ENCODE measurements at regions of chr9 and their contacts with region 1.

Region 1: GRCh38 chr9:111298731-111299598 is 31.1 kb downstream of the OR2K2 start:
- DNase-seq: no peak
- ATAC-seq: peak; percentile 47
- H3K4me3 Mint-ChIP-seq: no peak overlapping the region
- H3K27ac Mint-ChIP-seq: no peak overlapping the region
- H3K4me1 Mint-ChIP-seq: no peaks in the 10 kb centered on the region
- H3K27me3 Mint-ChIP-seq: peaks cover 6% of the 10 kb centered on the region

Region 2: GRCh38 chr9:110183208-110184145 is 1115.5 kb before region 1 on chr9:
- CTCF ChIA-PET with region 1: interaction called, 5 read pairs
- POLR2A ChIA-PET with region 1: no interaction called
- intact Hi-C with region 1: loop called (anchors 1 to 2 kb)
- DNase-seq: peak; percentile 77
- ATAC-seq: peak; percentile 90
- H3K4me3 Mint-ChIP-seq: no peak overlapping the region
- H3K27ac Mint-ChIP-seq: no peak overlapping the region
- H3K4me1 Mint-ChIP-seq: peaks cover 2% of the 10 kb centered on the region
- H3K27me3 Mint-ChIP-seq: no peaks in the 10 kb centered on the region

Region 3: DNA sequence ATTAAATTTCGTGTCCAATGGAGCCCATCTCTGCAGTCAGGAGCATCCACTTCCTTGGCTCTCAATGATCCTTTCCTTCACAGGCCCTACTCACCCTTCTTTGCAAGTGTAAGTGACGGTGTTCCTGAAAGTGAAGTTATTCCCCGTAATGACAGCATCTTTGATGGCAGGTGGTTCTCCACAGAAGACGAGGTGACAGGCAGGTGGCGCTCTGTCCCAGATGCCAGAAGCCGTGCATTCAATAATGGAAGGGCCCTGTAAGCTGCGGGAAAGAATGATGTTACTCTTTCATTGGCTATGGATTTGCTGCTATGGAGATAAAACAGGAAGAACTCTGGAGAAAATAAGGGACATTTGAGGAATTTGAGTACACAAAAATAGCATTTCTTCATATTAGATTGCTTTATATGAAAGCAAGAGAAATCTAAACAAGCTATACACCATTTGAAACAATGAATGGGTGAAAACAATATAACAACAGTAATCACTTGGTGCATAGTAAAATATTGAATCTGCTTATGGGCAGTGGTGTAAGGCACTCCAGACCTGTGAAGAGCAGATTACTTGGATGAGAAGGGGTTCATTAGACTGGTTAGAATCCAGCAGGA is 871.4 kb before region 1 on chr9:
- CTCF ChIA-PET with region 1: no interaction called
- POLR2A ChIA-PET with region 1: no interaction called
- intact Hi-C with region 1: loop called in 1 of 2 experiments (anchors 5 kb)
- DNase-seq: peak; percentile 71
- ATAC-seq: no peak
- H3K4me3 Mint-ChIP-seq: no peak overlapping the region
- H3K27ac Mint-ChIP-seq: no peak overlapping the region
- H3K4me1 Mint-ChIP-seq: no peaks in the 10 kb centered on the region
- H3K27me3 Mint-ChIP-seq: no peaks in the 10 kb centered on the region

Region 4: GRCh38 chr9:110452227-110452801 is 846.7 kb before region 1 on chr9:
- CTCF ChIA-PET with region 1: no interaction called
- POLR2A ChIA-PET with region 1: no interaction called
- intact Hi-C with region 1: loop called in 1 of 2 experiments (anchors 2 kb)
- DNase-seq: no peak
- ATAC-seq: no peak
- H3K4me3 Mint-ChIP-seq: no peak overlapping the region
- H3K27ac Mint-ChIP-seq: no peak overlapping the region
- H3K4me1 Mint-ChIP-seq: no peaks in the 10 kb centered on the region
- H3K27me3 Mint-ChIP-seq: peaks cover 3% of the 10 kb centered on the region

Region 5: GRCh38 chr9:110638381-110638954 is 660.5 kb before region 1 on chr9:
- CTCF ChIA-PET with region 1: no interaction called
- POLR2A ChIA-PET with region 1: no interaction called
- intact Hi-C with region 1: loop called (anchors 5 kb)
- DNase-seq: no peak
- ATAC-seq: no peak
- H3K4me3 Mint-ChIP-seq: no peak overlapping the region
- H3K27ac Mint-ChIP-seq: no peak overlapping the region
- H3K4me1 Mint-ChIP-seq: no peaks in the 10 kb centered on the region
- H3K27me3 Mint-ChIP-seq: no peaks in the 10 kb centered on the region

Region 6: DNA sequence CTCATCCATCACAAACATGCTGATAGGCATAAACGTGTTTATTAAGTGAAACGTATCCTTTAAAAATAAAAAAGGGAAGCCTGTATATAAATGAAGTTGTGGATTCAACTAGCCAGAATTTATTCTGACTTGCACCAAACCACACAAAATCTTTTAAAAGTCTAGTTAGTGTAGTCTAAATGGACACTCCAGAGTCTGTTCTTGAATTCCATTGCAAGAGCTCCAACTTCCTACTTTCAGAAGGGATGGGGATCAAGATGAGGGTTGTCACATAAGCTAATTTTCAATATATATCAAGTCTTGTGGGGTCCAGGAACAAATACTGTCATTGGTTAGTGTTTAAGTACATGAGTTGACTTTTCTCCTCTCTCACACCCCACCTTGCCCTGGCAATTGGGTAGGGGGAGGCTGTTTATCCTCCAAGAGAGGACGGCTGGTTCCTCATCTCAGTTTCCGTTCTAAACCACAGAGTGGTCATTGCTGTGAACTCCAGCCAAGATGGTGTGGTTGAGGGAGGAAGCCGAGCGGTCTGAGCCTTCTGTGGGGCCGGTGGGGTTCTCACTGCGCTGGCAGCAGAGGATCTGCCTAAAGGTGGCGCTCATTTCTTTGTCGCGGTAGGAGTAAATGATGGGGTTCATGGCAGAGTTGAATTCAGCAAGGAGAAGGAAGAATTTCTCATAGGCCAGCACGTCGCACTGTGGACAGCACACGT is 423.8 kb before region 1 on chr9:
- CTCF ChIA-PET with region 1: interaction called, 3 read pairs
- POLR2A ChIA-PET with region 1: no interaction called
- intact Hi-C with region 1: loop called in 1 of 2 experiments (anchors 5 kb)
- DNase-seq: peak; percentile 16
- ATAC-seq: no peak
- H3K4me3 Mint-ChIP-seq: no peak overlapping the region
- H3K27ac Mint-ChIP-seq: no peak overlapping the region
- H3K4me1 Mint-ChIP-seq: no peaks in the 10 kb centered on the region
- H3K27me3 Mint-ChIP-seq: peaks cover 13% of the 10 kb centered on the region

Region 7: GRCh38 chr9:111037381-111038305 is 261.3 kb before region 1 on chr9:
- CTCF ChIA-PET with region 1: no interaction called
- POLR2A ChIA-PET with region 1: no interaction called
- intact Hi-C with region 1: loop called in 1 of 2 experiments (anchors 5 kb)
- DNase-seq: peak; percentile 16
- ATAC-seq: no peak
- H3K4me3 Mint-ChIP-seq: no peak overlapping the region
- H3K27ac Mint-ChIP-seq: no peak overlapping the region
- H3K4me1 Mint-ChIP-seq: peaks cover 13% of the 10 kb centered on the region
- H3K27me3 Mint-ChIP-seq: peaks cover 36% of the 10 kb centered on the region

Measured in activated CD4-positive, alpha-beta T cell treated with anti-CD3 and anti-CD28 coated beads for 36 hours (primary cell).